CD8-positive, alpha-beta T cell (primary cell): ENCODE measurements at regions of chr3 and their contacts with region 1.

Region 1: GRCh38 chr3:12484198-12484974 is at the start of gene TSEN2:
- DNase-seq: peak; percentile 93 to 99 (median 96)
- ATAC-seq: peak; percentile 95
- H3K4me3 ChIP-seq: peak within 1 kb of the TSS; percentile 64 to 72
- H3K4me3 Mint-ChIP-seq: peak within 1 kb of the TSS; percentile 93
- H3K27ac ChIP-seq: peak within 1 kb of the TSS; percentile 76 to 83
- H3K27ac Mint-ChIP-seq: peak within 1 kb of the TSS; percentile 98
- H3K4me1 ChIP-seq: peaks cover 17% of the 10 kb centered on the region
- H3K4me1 Mint-ChIP-seq: peaks cover 37% of the 10 kb centered on the region
- H3K27me3 ChIP-seq: no peaks in the 10 kb centered on the region
- H3K27me3 Mint-ChIP-seq: no peaks in the 10 kb centered on the region
- CTCF ChIP-seq: no peak
- total RNA-seq, gene TSEN2: 5.1 to 6.1 TPM

Region 2: DNA sequence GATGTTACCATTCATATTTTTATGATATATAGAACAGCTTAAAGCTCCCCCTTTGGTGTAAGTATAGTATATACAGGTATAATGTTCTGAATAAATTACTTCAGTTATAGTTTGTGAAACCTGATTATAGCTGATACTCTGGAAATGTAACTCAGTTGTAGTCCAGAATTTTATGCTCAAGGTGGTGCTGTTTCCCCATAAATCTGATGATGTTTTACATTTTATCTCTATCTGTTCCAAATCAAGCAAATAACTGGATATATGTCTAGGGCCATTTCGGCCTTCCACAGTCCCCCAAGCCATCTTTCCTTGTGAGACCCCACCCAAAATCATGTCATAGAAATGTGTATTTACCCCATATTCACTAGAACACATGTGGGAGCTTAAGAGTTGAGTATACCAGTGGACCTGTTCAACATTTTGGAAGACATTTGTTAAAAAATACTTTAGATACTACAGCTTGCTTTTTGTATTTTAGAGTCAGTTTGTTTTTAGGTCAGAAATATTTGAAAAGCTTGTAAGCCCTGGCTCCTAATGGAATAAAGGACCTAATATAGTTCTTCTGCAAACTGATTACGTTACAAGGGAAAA is 1105.1 kb before region 1 on chr3:
- CTCF ChIA-PET with region 1: interaction called, 4 read pairs
- POLR2A ChIA-PET with region 1: no interaction called
- intact Hi-C with region 1: loop called (anchors 2 to 5 kb)
- DNase-seq: peak in 2 of 9 experiments; percentile 51 to 61
- ATAC-seq: peak; percentile 40
- H3K4me3 ChIP-seq: no peak overlapping the region
- H3K4me3 Mint-ChIP-seq: no peak overlapping the region
- H3K27ac ChIP-seq: no peak overlapping the region
- H3K27ac Mint-ChIP-seq: no peak overlapping the region
- H3K4me1 ChIP-seq: no peaks in the 10 kb centered on the region
- H3K4me1 Mint-ChIP-seq: no peaks in the 10 kb centered on the region
- H3K27me3 ChIP-seq: no peaks in the 10 kb centered on the region
- H3K27me3 Mint-ChIP-seq: no peaks in the 10 kb centered on the region
- CTCF ChIP-seq: peak; percentile 58

Region 3: DNA sequence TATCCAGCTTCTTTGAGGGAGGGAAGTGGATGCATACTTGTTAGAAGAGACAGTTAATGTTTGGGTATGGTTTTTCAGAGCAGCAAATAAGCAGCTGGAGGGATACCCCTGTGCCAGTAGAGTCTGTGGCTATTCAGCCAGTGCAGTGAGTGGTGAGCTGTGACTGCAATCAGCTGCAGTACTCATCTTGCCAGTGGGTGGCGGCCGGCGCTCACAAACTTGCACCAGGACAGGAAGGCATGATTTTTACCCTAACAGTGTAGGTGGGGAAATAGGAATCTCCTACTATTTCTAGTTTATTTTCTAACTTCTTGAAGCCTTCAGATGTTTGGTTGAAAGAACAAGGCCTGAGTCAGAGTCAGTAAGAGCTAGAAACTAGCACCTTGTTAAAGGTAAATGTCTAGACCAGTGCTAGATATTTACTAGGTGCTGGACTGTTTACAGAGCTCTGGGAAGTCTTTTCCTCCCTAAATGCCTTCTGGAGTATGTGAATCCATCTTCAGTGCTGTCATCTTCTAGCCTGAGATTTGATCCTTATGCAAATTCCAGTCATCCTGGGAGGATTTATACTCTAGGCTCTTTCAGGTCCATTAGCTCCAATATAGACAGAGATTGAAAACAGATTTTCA is 349.2 kb before region 1 on chr3:
- CTCF ChIA-PET with region 1: interaction called, 63 read pairs
- POLR2A ChIA-PET with region 1: interaction called, 3 read pairs
- intact Hi-C with region 1: loop called in 1 of 2 experiments (anchors 1 kb)
- DNase-seq: peak; percentile 12 to 66 (median 52)
- ATAC-seq: peak; percentile 75
- H3K4me3 ChIP-seq: no peak overlapping the region
- H3K4me3 Mint-ChIP-seq: no peak overlapping the region
- H3K27ac ChIP-seq: no peak overlapping the region
- H3K27ac Mint-ChIP-seq: no peak overlapping the region
- H3K4me1 ChIP-seq: no peaks in the 10 kb centered on the region
- H3K4me1 Mint-ChIP-seq: no peaks in the 10 kb centered on the region
- H3K27me3 ChIP-seq: no peaks in the 10 kb centered on the region
- H3K27me3 Mint-ChIP-seq: peaks cover 5% of the 10 kb centered on the region
- CTCF ChIP-seq: peak; percentile 63

Region 4: DNA sequence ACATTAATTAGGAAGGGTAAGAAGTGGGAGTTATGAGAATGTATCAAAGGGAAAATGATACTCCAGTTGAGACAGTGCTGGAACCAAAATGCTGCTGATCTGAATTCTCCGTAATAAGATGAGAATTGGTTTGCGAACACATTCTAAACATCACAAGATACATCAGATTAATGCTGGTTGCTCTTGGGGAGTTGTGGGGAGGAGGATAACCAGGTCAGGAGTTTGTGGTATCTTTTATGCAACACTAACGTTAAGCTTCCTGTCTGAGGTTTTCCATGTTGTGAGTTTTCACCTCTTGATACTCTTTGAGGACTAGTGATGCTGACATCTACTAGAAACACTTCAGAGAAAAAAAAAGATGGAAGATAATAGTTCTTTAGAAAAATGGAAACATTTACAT is 148.3 kb before region 1 on chr3:
- CTCF ChIA-PET with region 1: no interaction called
- POLR2A ChIA-PET with region 1: no interaction called
- intact Hi-C with region 1: no loop called
- DNase-seq: peak in 3 of 9 experiments; percentile 21 to 53 (median 45)
- ATAC-seq: peak; percentile 77
- H3K4me3 ChIP-seq: no peak overlapping the region
- H3K4me3 Mint-ChIP-seq: peak overlapping the region; percentile 4
- H3K27ac ChIP-seq: no peak overlapping the region
- H3K27ac Mint-ChIP-seq: peak overlapping the region; percentile 73
- H3K4me1 ChIP-seq: peaks cover 7% of the 10 kb centered on the region
- H3K4me1 Mint-ChIP-seq: peaks cover 15% of the 10 kb centered on the region
- H3K27me3 ChIP-seq: no peaks in the 10 kb centered on the region
- H3K27me3 Mint-ChIP-seq: no peaks in the 10 kb centered on the region
- CTCF ChIP-seq: no peak

Region 5: GRCh38 chr3:12471243-12471651 is 13.1 kb before region 1 on chr3:
- CTCF ChIA-PET with region 1: interaction called, 24 read pairs
- POLR2A ChIA-PET with region 1: interaction called, 3 read pairs
- intact Hi-C with region 1: no loop called
- DNase-seq: peak in 1 of 9 experiments; percentile 8
- ATAC-seq: peak; percentile 36
- H3K4me3 ChIP-seq: no peak overlapping the region
- H3K4me3 Mint-ChIP-seq: no peak overlapping the region
- H3K27ac ChIP-seq: no peak overlapping the region
- H3K27ac Mint-ChIP-seq: no peak overlapping the region
- H3K4me1 ChIP-seq: no peaks in the 10 kb centered on the region
- H3K4me1 Mint-ChIP-seq: no peaks in the 10 kb centered on the region
- H3K27me3 ChIP-seq: no peaks in the 10 kb centered on the region
- H3K27me3 Mint-ChIP-seq: no peaks in the 10 kb centered on the region
- CTCF ChIP-seq: no peak

Region 6: GRCh38 chr3:12719984-12720898 is 235.9 kb after region 1 on chr3:
- CTCF ChIA-PET with region 1: interaction called, 4 read pairs
- POLR2A ChIA-PET with region 1: no interaction called
- intact Hi-C with region 1: loop called in 1 of 2 experiments (anchors 2 kb)
- DNase-seq: peak; percentile 46 to 89 (median 71)
- ATAC-seq: peak; percentile 99
- H3K4me3 ChIP-seq: no peak overlapping the region
- H3K4me3 Mint-ChIP-seq: peak overlapping the region; percentile 69
- H3K27ac ChIP-seq: no peak overlapping the region
- H3K27ac Mint-ChIP-seq: no peak overlapping the region
- H3K4me1 ChIP-seq: peaks cover 4% of the 10 kb centered on the region
- H3K4me1 Mint-ChIP-seq: peaks cover 10% of the 10 kb centered on the region
- H3K27me3 ChIP-seq: peaks cover 0 to 3% of the 10 kb centered on the region in 2 experiments
- H3K27me3 Mint-ChIP-seq: no peaks in the 10 kb centered on the region
- CTCF ChIP-seq: peak; percentile 84

Region 7: DNA sequence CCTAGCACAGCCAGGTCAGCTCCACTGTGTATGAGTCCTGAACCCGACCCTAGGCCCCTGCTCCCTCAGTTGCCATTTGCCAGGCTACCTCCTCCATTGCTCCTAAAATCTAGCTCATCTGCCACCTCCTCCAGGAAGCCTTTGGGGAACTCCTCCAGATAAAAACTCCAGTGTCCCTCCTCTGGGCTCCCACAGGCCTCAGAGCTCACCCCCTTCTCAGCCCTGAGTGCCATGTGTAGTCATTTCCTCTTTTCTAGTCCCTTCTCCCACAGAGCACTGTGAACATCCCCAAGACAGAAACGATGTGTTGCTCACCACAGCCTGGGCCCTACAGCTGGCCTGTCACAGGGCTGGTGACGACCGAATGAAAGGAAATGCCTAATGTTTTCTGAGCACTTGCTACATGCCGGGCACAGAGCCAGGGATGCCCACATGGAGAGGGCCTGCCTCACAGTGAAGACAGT is 527.9 kb after region 1 on chr3:
- CTCF ChIA-PET with region 1: no interaction called
- POLR2A ChIA-PET with region 1: no interaction called
- intact Hi-C with region 1: loop called in 1 of 2 experiments (anchors 10 kb)
- DNase-seq: peak in 5 of 9 experiments; percentile 41 to 89 (median 70)
- ATAC-seq: peak; percentile 17
- H3K4me3 ChIP-seq: peak overlapping the region; percentile 4 to 12
- H3K4me3 Mint-ChIP-seq: peak overlapping the region; percentile 67
- H3K27ac ChIP-seq: peak overlapping the region; percentile 74 to 98
- H3K27ac Mint-ChIP-seq: peak overlapping the region; percentile 97
- H3K4me1 ChIP-seq: peaks cover 96% of the 10 kb centered on the region
- H3K4me1 Mint-ChIP-seq: peaks cover 80% of the 10 kb centered on the region
- H3K27me3 ChIP-seq: no peaks in the 10 kb centered on the region
- H3K27me3 Mint-ChIP-seq: no peaks in the 10 kb centered on the region
- CTCF ChIP-seq: no peak